HEK293 (cell line): ENCODE measurements at regions of chrX and their contacts with region 1.

Region 1: DNA sequence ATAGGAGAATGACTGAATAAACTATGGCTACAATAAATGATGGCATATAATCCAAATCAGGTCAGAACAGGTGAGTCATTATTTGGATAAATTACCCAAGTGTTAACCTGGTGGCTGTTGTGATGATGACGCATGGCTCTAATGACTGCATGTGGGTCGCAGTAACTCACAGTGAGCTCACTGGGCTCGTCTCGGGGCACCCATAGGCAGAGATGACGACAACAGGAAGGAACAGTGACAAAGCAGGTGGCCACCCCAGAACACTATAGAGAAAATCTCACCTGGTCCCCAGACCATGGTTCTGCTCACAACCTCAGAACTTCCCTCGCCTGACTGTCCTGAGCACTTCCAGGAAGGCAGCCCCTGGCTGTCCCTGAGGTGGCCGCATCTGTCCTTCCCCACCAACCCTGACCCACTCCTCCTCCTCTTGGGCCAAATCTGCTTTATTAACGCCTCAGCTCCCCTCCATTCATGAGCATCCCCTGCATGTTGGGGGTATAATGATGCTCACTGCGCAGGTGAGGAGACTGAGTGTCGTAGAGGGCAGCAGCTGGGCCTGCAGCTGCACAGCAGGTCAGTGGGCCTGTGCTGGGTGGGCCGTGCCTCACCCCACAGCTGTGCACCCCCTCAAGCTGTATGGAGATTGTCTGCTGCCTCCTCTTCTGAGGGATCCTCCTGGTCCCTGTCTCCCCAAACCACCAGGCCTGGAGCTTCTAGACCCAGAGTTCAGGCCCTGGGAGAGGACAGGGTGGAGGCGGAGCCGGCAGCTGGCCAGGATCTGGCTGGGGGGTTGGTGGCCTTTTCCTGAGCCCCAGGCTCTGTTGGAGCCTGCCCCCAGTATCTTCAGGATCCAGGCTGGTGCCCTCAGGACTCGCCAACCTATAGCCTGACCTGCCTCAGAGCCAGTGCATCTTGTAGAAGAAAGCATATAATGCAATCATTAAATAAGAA is 30.9 kb upstream of the FAM156A start:
- H3K4me3 ChIP-seq: no peak overlapping the region
- H3K27ac ChIP-seq: no peak overlapping the region
- H3K4me1 ChIP-seq: no peaks in the 10 kb centered on the region
- CTCF ChIP-seq: no peak

Region 2: GRCh38 chrX:53000447-53001135 is 11.3 kb after region 1 on chrX:
- CTCF ChIA-PET with region 1: interaction called, 15 read pairs
- POLR2A ChIA-PET with region 1: no interaction called
- H3K4me3 ChIP-seq: no peak overlapping the region
- H3K27ac ChIP-seq: no peak overlapping the region
- H3K4me1 ChIP-seq: no peaks in the 10 kb centered on the region
- CTCF ChIP-seq: no peak